ENCODE measurements at regions of chr1 and their contacts with region 1.

Region 1: DNA sequence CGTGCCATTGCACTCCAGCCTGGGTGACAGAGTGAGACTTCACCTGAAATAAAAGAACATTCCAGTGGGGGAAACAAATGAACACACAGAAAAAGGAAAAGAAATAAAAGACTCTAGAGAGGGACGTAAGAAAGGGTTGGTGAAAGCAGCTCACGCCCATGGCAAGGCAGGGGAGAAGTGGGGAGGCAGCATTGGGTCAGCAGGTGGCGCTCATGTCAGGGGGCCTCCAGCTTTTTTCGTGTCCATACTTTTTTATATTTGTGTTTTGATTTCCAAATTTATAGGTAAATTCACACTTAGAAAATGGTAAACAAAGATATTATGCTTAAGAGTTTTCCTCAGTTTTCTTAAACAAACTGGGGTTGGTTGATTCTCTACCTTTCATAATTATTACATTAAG is 45.5 kb downstream of the VPS13D start:
- DNase-seq: peak in 1 of 2 experiments; percentile 25
- H3K4me3 ChIP-seq: no peak overlapping the region
- H3K27ac ChIP-seq: no peak overlapping the region
- H3K4me1 ChIP-seq: no peaks in the 10 kb centered on the region
- H3K27me3 ChIP-seq: no peaks in the 10 kb centered on the region
- CTCF ChIP-seq: peak; percentile 59

Region 2: GRCh38 chr1:12220890-12221289 is 54.5 kb before region 1 on chr1:
- CTCF ChIA-PET with region 1: no interaction called
- POLR2A ChIA-PET with region 1: no interaction called
- intact Hi-C with region 1: no loop called
- DNase-seq: no peak
- H3K4me3 ChIP-seq: no peak overlapping the region
- H3K27ac ChIP-seq: no peak overlapping the region
- H3K4me1 ChIP-seq: no peaks in the 10 kb centered on the region
- H3K27me3 ChIP-seq: peaks cover 5% of the 10 kb centered on the region; the same call in 1 of the 2 replicates
- CTCF ChIP-seq: no peak

Region 3: DNA sequence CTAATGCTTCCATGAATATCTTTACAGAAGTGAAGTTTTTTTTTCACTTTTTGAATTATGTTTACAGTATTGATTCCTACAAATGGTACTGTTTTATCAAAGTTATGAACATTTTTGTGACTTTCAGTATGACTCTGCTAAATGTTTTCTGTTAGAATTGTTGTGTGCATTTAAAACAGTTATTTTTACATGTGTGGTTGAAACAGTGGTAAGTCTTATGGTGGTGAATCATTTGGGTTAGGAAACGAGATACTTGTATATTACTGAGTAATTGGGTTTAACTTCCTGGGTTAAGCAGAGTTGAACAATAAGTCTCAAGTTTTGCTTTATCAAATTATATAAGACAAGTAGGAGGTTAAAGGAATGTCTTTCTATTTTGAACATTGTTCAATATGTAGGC is 21.3 kb after region 1 on chr1:
- CTCF ChIA-PET with region 1: interaction called, 10 read pairs
- POLR2A ChIA-PET with region 1: no interaction called
- intact Hi-C with region 1: no loop called
- DNase-seq: no peak
- H3K4me3 ChIP-seq: no peak overlapping the region
- H3K27ac ChIP-seq: peak overlapping the region; percentile 9; the same call in 1 of the 2 replicates
- H3K4me1 ChIP-seq: no peaks in the 10 kb centered on the region
- H3K27me3 ChIP-seq: no peaks in the 10 kb centered on the region
- CTCF ChIP-seq: no peak

Region 4: DNA sequence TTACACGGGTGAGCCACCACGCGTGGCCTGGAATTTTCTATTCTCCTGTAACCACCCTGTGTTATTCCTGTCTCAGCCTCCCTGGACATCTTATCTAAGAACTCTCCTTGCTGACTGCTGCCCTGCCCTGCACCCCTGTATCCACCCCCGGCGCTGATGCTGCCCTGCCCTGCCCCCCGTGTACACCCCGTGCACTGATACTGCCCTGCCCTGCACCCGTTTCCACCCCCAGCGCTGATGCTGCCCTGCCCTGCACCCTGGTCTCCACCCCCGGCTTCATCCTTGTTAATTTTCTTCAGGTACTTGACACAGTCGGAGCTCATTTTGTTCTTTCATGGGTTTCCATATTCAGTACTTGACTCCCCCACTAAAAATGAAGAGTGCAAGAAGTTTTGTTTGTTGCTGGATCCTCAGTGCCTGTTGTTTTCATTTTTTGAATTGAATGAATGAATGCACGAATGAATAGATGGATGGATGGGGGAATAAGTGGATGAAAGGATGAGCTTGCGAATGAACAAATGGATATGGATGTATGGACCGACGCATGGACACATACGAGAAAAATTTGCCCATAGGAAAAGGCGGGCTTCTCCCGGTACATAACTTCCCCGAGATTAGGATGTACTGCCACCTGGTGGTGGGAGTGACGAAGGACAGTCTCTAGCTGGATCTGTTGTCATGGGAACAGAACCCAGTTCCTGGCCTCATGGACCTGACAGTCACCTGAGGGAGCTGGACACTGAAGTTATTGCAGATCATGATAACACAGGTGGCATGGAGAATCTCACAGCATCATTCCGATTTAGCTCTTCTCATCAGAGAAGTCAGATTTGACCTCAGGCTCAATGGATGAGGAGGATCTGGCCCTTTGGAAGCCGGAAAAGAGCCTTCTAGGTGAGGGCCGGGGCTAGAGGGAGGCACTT is 383.4 kb after region 1 on chr1:
- CTCF ChIA-PET with region 1: interaction called, 3 read pairs
- POLR2A ChIA-PET with region 1: no interaction called
- intact Hi-C with region 1: loop called (anchors 1 kb)
- DNase-seq: peak; percentile 62 to 64
- H3K4me3 ChIP-seq: no peak overlapping the region
- H3K27ac ChIP-seq: no peak overlapping the region
- H3K4me1 ChIP-seq: no peaks in the 10 kb centered on the region
- H3K27me3 ChIP-seq: no peaks in the 10 kb centered on the region
- CTCF ChIP-seq: peak; percentile 88

Region 5: DNA sequence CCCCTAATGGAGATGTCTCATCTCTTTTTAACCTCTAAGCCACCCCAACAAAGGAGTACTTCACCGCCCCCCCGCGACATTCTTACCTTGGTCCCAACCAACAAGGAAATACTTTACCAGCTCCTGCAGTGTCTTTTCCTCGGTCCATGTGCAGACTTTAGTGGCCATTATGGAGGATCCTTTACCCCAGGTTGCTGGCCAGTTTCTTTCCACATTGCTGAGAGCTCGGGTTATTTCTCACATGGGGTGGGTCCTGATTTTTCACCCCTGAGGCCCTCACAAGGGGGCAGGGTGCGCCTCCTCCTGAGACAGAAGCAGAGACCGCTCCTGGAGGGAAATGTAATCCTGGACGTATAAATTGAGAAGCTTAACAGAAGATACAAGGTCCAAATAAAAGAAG is 437.6 kb after region 1 on chr1:
- CTCF ChIA-PET with region 1: interaction called, 12 read pairs
- POLR2A ChIA-PET with region 1: no interaction called
- intact Hi-C with region 1: no loop called
- DNase-seq: no peak
- H3K4me3 ChIP-seq: no peak overlapping the region
- H3K27ac ChIP-seq: no peak overlapping the region
- H3K4me1 ChIP-seq: no peaks in the 10 kb centered on the region
- H3K27me3 ChIP-seq: no peaks in the 10 kb centered on the region
- CTCF ChIP-seq: no peak

Region 6: DNA sequence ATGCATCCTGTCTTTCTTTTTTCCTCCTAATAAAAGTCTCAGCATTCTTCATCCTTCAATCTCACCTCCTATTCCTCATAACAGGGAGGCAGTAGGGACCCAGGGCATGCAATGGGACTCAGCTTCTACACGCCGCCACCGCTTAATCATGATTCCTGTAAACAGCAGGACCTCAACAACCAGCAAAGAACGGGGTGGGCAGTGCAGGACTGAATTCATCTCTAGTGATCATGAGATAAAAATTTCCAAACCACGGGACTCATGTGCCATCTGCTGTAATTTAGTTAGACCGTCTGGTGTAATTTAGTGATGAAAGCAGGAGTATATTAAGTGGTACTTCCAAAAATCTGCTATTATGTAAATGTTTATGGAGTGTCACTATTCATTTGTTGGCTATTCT is 503.5 kb after region 1 on chr1:
- CTCF ChIA-PET with region 1: no interaction called
- POLR2A ChIA-PET with region 1: no interaction called
- intact Hi-C with region 1: loop called (anchors 10 kb)
- DNase-seq: no peak
- H3K4me3 ChIP-seq: no peak overlapping the region
- H3K27ac ChIP-seq: no peak overlapping the region
- H3K4me1 ChIP-seq: no peaks in the 10 kb centered on the region
- H3K27me3 ChIP-seq: 0 out of 2 replicates have a peak, but pooled peaks cover 6% of the 10 kb centered on the region
- CTCF ChIP-seq: no peak